ENCODE measurements at regions of chr1 and their contacts with region 1.

Region 1: DNA sequence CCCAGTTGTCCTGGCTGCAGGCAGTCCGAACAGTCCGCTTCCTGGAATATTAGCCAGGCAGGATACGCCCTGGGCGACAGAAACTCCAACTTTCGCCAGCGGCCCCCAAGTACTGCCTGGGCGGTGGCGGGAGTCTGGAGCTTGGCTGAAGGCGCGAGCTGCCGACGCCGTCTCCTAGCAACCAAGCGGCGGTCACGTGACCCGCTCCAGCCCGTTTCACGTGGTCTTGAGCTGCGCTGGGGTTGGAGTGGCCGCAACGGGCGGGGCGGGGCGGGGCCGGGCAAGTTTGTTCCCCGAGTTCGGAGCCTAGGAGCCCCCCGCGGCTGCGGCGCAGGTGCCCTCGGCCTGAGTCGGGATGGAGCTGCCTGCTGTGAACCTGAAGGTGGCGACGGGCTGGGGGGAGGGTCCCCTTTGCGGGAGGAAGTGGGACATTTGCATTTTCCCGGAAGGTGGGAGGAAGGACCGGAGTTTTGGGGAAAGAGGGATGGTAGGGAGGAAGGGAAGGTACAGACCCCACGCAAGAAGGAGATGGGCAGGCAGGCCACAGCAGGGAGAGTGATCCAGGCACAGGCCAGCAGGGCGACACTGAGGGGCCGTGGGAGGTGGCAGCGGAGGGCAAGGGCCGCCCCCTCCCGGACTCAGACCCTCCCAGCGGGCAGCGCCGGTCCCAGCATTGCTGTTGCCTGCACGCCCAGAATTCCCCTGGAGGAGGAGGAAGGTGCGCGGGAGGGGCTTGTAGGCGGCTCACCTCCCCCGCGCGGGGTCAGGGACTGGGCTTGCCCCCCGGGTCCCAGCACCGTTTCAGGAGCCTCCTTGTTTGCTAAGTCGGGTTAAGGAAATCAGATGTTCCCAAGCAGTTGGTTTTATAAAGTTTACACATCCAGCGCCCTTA is at the start of gene AGTRAP:
- DNase-seq: peak; percentile 92
- H3K4me3 Mint-ChIP-seq: peak within 1 kb of the TSS; percentile 98
- H3K27ac Mint-ChIP-seq: peak within 1 kb of the TSS; percentile 86
- H3K4me1 Mint-ChIP-seq: peaks cover 69% of the 10 kb centered on the region
- H3K27me3 Mint-ChIP-seq: no peaks in the 10 kb centered on the region
- total RNA-seq, gene AGTRAP: 52.7 to 57.3 TPM

Region 2: DNA sequence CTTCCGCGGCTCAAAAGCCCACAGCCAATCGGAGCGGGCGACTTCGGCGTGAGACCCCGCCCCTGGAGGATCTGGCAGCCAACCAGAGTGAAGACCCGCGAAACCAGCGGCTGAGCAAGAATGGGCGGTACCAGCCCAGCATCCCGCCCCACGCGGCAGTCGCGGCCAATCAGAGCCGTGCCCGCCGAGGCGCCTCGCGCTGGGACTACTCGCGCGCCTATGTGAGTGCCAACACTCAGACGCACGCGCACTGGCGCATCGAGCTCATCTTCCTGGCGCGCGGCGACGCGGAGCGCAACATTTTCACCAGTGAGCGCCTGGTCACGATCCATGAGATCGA is 234.6 kb before region 1 on chr1:
- CTCF ChIA-PET with region 1: no interaction called
- POLR2A ChIA-PET with region 1: no interaction called
- DNase-seq: no peak
- H3K4me3 Mint-ChIP-seq: no peak overlapping the region
- H3K27ac Mint-ChIP-seq: no peak overlapping the region
- H3K4me1 Mint-ChIP-seq: no peaks in the 10 kb centered on the region
- H3K27me3 Mint-ChIP-seq: peaks cover 8% of the 10 kb centered on the region

Region 3: GRCh38 chr1:11749203-11749689 is 13.1 kb after region 1 on chr1:
- CTCF ChIA-PET with region 1: interaction called, 6 read pairs
- POLR2A ChIA-PET with region 1: interaction called, 12 read pairs
- DNase-seq: peak; percentile 78
- H3K4me3 Mint-ChIP-seq: no peak overlapping the region
- H3K27ac Mint-ChIP-seq: peak overlapping the region; percentile 74
- H3K4me1 Mint-ChIP-seq: peaks cover 42% of the 10 kb centered on the region
- H3K27me3 Mint-ChIP-seq: no peaks in the 10 kb centered on the region

Region 4: DNA sequence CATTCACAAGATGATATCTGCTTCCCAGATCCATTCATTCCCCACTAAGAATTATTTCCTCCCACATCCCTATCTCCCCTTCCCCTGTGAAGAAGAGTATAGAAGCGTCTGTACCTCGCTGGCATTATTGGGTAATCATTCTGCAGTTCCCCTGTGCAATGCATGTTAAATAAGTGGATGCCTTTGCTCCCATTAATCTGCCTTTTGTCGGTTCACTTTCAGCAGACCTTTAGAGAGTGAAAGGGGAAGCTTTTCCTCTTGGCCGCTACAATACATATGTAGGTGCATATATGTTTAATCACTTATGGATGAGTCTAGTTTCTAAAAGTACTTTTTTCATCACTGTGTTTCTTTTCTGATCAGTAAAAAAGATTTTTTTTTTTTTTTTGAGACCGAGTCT is 76.9 kb after region 1 on chr1:
- CTCF ChIA-PET with region 1: no interaction called
- POLR2A ChIA-PET with region 1: no interaction called
- DNase-seq: no peak
- H3K4me3 Mint-ChIP-seq: no peak overlapping the region
- H3K27ac Mint-ChIP-seq: no peak overlapping the region
- H3K4me1 Mint-ChIP-seq: peaks cover 15% of the 10 kb centered on the region
- H3K27me3 Mint-ChIP-seq: no peaks in the 10 kb centered on the region